Activated CD4-positive, alpha-beta T cell treated with anti-CD3 and anti-CD28 coated beads, Interleukin-2, amount 10 ng/mL, durations not matched to agents 7 days and 5 days (primary cell): ENCODE measurements at regions of chr15 and their contacts with region 1.

Region 1: DNA sequence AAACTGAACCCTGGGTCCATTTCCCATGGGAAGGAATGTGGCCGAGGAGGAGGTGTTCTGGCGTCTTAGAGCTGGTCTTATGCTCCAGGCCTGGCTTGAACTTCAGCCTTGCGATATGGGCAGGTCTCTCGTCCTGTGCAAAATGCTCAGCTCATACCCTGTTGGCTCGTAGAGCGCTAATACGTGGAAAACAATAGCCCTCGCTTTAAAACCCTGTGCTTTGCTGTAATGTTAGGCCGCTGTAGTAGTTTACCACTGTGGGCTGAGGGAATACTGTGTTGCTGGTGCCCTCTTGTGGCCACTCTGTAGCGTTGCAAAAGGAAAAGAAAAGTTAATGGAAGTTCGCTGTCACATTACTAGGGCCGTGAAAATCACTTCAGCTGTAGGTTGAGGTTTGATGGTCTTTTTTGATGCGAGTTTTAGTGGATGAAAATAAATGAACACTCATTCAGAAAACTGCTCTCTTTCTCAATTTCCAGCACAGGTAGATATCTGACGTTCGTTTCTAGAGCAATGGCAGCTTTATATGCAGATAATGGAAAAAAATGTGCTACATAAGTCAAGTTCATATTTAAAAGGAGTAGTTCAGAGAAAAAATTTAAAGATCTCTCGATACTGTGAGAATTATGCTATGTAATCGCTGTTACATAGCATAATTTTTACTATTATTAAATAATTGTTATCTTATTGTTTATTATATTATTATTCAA is 92.9 kb downstream of the MCTP2 start:
- DNase-seq: peak; percentile 69
- H3K4me3 Mint-ChIP-seq: no peak overlapping the region
- H3K27ac Mint-ChIP-seq: no peak overlapping the region
- H3K4me1 Mint-ChIP-seq: peaks cover 22% of the 10 kb centered on the region
- H3K27me3 Mint-ChIP-seq: no peaks in the 10 kb centered on the region

Region 2: GRCh38 chr15:94163999-94164807 is 160.1 kb before region 1 on chr15:
- CTCF ChIA-PET with region 1: interaction called, 59 read pairs
- POLR2A ChIA-PET with region 1: no interaction called
- DNase-seq: peak; percentile 66
- H3K4me3 Mint-ChIP-seq: no peak overlapping the region
- H3K27ac Mint-ChIP-seq: no peak overlapping the region
- H3K4me1 Mint-ChIP-seq: no peaks in the 10 kb centered on the region
- H3K27me3 Mint-ChIP-seq: peaks cover 9% of the 10 kb centered on the region

Region 3: GRCh38 chr15:94174399-94174802 is 149.9 kb before region 1 on chr15:
- CTCF ChIA-PET with region 1: interaction called, 10 read pairs
- POLR2A ChIA-PET with region 1: no interaction called
- DNase-seq: no peak
- H3K4me3 Mint-ChIP-seq: no peak overlapping the region
- H3K27ac Mint-ChIP-seq: no peak overlapping the region
- H3K4me1 Mint-ChIP-seq: peaks cover 23% of the 10 kb centered on the region
- H3K27me3 Mint-ChIP-seq: peaks cover 10% of the 10 kb centered on the region

Region 4: GRCh38 chr15:94230956-94231722 is 93.1 kb before region 1 on chr15 and contains the start of gene MCTP2:
- CTCF ChIA-PET with region 1: interaction called, 11 read pairs
- POLR2A ChIA-PET with region 1: interaction called, 4 read pairs
- DNase-seq: peak; percentile 84
- H3K4me3 Mint-ChIP-seq: peak within 1 kb of the TSS; percentile 90
- H3K27ac Mint-ChIP-seq: peak within 1 kb of the TSS; percentile 97
- H3K4me1 Mint-ChIP-seq: peaks cover 65% of the 10 kb centered on the region
- H3K27me3 Mint-ChIP-seq: peaks cover 2% of the 10 kb centered on the region
- total RNA-seq, gene MCTP2: 17.0 to 17.2 TPM

Region 5: DNA sequence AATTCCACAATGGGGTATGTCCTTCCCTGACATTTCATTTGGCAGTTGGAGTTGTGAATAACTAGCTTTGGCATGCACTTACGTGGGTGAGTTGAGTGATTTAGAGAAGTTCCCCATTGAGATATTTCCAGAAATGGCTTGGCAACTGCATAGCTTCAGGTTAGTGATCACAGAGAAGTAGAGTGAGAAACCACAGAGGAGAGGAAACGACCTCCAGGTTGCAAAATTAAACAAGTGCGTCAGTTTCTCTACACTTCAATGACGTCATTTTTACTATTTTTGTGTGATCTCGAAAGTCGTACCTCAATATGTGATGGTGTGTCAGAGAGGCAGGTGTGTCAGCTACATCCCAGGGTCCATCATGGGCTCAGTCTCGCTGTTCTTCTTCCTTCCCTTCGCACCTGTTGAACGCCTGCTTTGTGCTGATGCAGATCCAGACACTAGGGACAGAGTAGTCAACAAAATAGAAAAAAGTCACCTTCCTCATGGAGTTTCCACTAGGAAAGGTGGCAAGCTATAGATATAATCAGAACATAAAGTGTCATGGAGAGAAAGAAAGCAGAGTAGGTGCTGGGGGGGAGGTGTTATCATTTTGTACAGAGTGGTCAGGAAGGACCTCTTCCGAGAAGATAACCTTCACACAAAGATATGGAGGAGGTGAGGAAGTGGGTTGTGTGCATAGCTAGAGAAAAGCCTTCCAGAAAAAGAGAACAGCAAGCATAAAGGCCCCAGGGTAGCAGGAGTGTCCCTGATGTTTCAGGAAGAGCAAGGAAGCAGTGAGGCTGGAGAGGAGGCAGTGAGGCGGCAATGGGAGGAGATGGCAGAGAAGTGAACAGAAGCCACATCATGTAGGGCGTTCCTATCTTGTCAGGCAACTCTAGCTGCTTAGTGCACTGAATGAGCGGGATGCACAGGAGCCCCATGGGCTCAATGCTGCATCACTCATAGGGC is 17.3 kb before region 1 on chr15:
- CTCF ChIA-PET with region 1: interaction called, 12 read pairs
- POLR2A ChIA-PET with region 1: no interaction called
- DNase-seq: no peak
- H3K4me3 Mint-ChIP-seq: no peak overlapping the region
- H3K27ac Mint-ChIP-seq: peak overlapping the region; percentile 38
- H3K4me1 Mint-ChIP-seq: peaks cover 46% of the 10 kb centered on the region
- H3K27me3 Mint-ChIP-seq: no peaks in the 10 kb centered on the region

Region 6: DNA sequence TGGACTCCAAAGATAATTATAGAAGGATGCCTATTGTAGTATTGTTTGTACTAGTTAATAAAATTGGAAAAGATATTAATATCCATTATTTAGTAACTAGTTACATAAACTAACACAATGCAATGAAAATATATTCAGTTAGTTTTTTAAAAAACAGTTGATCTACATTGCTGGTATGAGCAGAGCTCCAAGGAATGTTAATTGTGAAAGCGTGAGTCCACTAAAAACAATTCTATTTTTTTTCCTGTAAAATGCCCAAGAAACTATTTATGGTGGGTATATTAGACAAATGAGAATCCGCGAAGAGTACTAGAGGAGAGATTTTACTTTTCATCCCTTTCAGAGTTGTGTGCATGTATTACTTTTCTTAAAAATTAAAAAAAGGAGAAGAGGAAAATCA is 11.3 kb after region 1 on chr15:
- CTCF ChIA-PET with region 1: interaction called, 25 read pairs
- POLR2A ChIA-PET with region 1: no interaction called
- DNase-seq: no peak
- H3K4me3 Mint-ChIP-seq: no peak overlapping the region
- H3K27ac Mint-ChIP-seq: no peak overlapping the region
- H3K4me1 Mint-ChIP-seq: no peaks in the 10 kb centered on the region
- H3K27me3 Mint-ChIP-seq: no peaks in the 10 kb centered on the region